Activated naive CD4-positive, alpha-beta T cell treated with anti-CD3 and anti-CD28 coated beads for 36 hours (primary cell): ENCODE measurements at regions of chrX and their contacts with region 1.

Region 1: DNA sequence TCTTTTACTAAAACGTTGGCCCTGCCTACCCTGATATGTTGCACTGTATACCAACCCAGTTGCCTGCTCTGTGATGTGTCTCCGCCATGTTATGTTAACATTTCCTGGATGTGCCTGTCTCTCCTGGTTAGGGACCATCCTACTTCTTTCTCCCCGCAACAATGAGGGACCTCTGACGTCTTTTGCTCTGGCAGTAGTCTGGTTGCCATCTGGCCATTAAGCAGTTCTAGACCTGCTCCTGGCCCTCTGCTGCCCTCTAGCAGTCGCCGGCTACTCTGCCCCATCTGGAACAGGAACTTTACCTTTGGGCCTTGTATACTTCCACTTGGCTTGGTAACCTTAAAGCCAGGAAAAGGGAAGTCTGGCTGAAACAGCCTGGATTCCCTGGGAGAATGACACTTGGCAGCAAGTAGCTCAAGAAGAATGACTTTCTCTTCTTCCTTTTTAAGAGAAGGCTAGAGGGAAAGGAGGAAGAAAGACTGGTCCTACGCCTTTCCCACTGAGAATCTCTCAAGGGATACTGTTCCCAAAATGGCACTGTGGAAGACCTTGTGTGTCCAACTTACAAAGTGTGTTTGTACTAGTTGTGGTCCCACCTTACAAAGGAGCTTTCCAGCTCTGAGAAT is 63.5 kb downstream of the GPC3 start:
- DNase-seq: peak; percentile 60
- H3K4me3 Mint-ChIP-seq: no peak overlapping the region
- H3K27ac Mint-ChIP-seq: no peak overlapping the region
- H3K4me1 Mint-ChIP-seq: peaks cover 17% of the 10 kb centered on the region
- H3K27me3 Mint-ChIP-seq: no peaks in the 10 kb centered on the region

Region 2: DNA sequence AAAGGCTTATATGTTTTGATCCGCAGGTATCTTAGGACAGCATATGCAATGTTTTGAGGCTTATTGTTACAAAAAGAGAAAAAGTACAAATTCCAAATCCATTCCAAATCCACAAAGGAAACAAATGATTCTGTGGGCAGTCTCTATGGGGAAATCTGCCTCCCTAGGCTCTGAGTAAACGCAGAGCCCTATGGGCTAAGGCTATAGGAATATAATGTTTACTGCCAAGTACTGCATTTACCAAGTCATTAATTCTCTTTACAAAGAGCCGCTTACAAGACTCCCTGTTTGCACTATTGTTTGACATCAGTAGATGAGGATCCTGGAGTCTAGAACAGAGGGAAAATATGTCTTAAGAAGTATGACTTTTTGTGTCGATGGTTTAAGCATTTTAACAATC is 294.2 kb before region 1 on chrX:
- CTCF ChIA-PET with region 1: no interaction called
- intact Hi-C with region 1: no loop called
- DNase-seq: no peak
- H3K4me3 Mint-ChIP-seq: no peak overlapping the region
- H3K27ac Mint-ChIP-seq: no peak overlapping the region
- H3K4me1 Mint-ChIP-seq: no peaks in the 10 kb centered on the region
- H3K27me3 Mint-ChIP-seq: no peaks in the 10 kb centered on the region

Region 3: GRCh38 chrX:133745349-133745748 is 176.5 kb before region 1 on chrX:
- CTCF ChIA-PET with region 1: no interaction called
- intact Hi-C with region 1: loop called (anchors 5 kb)
- DNase-seq: peak; percentile 37
- H3K4me3 Mint-ChIP-seq: no peak overlapping the region
- H3K27ac Mint-ChIP-seq: no peak overlapping the region
- H3K4me1 Mint-ChIP-seq: peaks cover 54% of the 10 kb centered on the region
- H3K27me3 Mint-ChIP-seq: no peaks in the 10 kb centered on the region

Region 4: GRCh38 chrX:133838761-133839676 is 82.9 kb before region 1 on chrX:
- CTCF ChIA-PET with region 1: interaction called, 4 read pairs
- intact Hi-C with region 1: loop called (anchors 5 kb)
- DNase-seq: peak; percentile 45
- H3K4me3 Mint-ChIP-seq: no peak overlapping the region
- H3K27ac Mint-ChIP-seq: no peak overlapping the region
- H3K4me1 Mint-ChIP-seq: no peaks in the 10 kb centered on the region
- H3K27me3 Mint-ChIP-seq: no peaks in the 10 kb centered on the region

Region 5: GRCh38 chrX:134006484-134007161 is 84.7 kb after region 1 on chrX:
- CTCF ChIA-PET with region 1: no interaction called
- intact Hi-C with region 1: loop called (anchors 5 kb)
- DNase-seq: peak; percentile 52
- H3K4me3 Mint-ChIP-seq: no peak overlapping the region
- H3K27ac Mint-ChIP-seq: no peak overlapping the region
- H3K4me1 Mint-ChIP-seq: peaks cover 6% of the 10 kb centered on the region
- H3K27me3 Mint-ChIP-seq: no peaks in the 10 kb centered on the region

Region 6: GRCh38 chrX:134026565-134027311 is 104.9 kb after region 1 on chrX:
- CTCF ChIA-PET with region 1: interaction called, 8 read pairs
- intact Hi-C with region 1: loop called (anchors 5 kb)
- DNase-seq: peak; percentile 64
- H3K4me3 Mint-ChIP-seq: peak overlapping the region; percentile 29
- H3K27ac Mint-ChIP-seq: no peak overlapping the region
- H3K4me1 Mint-ChIP-seq: peaks cover 6% of the 10 kb centered on the region
- H3K27me3 Mint-ChIP-seq: no peaks in the 10 kb centered on the region

Region 7: GRCh38 chrX:134158821-134159512 is 237.1 kb after region 1 on chrX:
- CTCF ChIA-PET with region 1: interaction called, 4 read pairs
- intact Hi-C with region 1: loop called (anchors 10 kb)
- DNase-seq: peak; percentile 64
- H3K4me3 Mint-ChIP-seq: no peak overlapping the region
- H3K27ac Mint-ChIP-seq: peak overlapping the region; percentile 36
- H3K4me1 Mint-ChIP-seq: peaks cover 19% of the 10 kb centered on the region
- H3K27me3 Mint-ChIP-seq: no peaks in the 10 kb centered on the region